Astrocyte of the cerebellum (primary cell): ENCODE measurements at regions of chr3 and their contacts with region 1.

Region 1: GRCh38 chr3:48507351-48508061 is 3.5 kb upstream of the SHISA5 start:
- DNase-seq: peak; percentile 63
- H3K4me3 ChIP-seq: no peak overlapping the region
- CTCF ChIP-seq: peak; percentile 67

Region 2: GRCh38 chr3:48472915-48473616 is 34.4 kb before region 1 on chr3:
- in situ Hi-C with region 1: loop called (anchors 5 kb)
- DNase-seq: peak; percentile 75
- H3K4me3 ChIP-seq: peak overlapping the region; percentile 64
- CTCF ChIP-seq: peak; percentile 17